ENCODE measurements at regions of chr10 and their contacts with region 1.

Region 1: DNA sequence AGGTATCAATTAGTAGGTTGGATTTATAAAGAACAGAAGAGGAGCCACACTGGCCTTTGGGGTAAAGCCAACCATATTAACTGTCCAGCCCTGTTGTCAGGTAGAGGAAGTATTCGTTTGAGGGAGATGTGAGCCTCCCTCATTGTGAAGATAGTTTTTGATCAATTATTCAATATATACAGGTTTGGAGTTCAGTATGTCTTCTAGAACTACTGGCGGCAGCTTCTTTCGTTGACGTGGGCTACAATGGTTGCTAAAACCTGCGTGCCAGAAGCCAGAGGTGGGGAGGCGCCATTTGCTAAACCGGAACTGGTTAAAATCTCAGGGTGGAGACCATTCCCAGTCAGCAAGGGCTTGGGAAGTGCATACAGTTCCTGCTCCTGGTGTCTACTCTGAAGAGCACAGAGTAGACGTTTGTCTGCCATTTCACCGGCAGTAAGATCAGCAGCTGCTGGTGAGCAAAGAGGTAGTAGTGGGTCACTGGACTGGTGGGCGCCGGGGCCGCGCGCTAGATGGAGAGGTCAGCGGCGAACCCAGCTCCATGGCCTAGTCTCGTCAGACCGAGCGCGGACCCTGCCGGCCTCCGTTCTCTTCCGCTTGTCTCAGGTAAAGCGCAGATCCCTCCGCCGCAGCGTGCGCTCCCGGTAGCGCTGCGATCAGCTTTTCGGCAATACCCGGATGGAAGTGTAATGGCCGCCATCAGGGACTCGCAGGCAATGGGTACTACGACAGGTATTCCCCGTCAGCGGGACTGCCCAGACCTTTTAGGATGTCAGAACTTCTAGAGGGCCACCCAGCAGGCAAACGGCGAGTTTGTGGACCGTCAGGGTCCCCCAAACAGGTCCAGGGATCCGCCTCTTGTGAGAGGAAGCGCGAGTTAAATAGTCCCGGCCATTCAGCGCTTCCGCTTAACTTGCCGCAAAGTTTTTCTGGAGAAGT is at the start of gene ZNF518A:
- DNase-seq: peak; percentile 87
- ATAC-seq: peak; percentile 86
- H3K4me3 Mint-ChIP-seq: peak within 1 kb of the TSS; percentile 97
- H3K27ac Mint-ChIP-seq: peak within 1 kb of the TSS; percentile 100
- H3K4me1 Mint-ChIP-seq: peaks cover 21% of the 10 kb centered on the region
- H3K27me3 Mint-ChIP-seq: peaks cover 24% of the 10 kb centered on the region
- CTCF ChIP-seq: no peak
- total RNA-seq, gene ZNF518A: 23.8 and 28.7 TPM in 2 replicates

Region 2: DNA sequence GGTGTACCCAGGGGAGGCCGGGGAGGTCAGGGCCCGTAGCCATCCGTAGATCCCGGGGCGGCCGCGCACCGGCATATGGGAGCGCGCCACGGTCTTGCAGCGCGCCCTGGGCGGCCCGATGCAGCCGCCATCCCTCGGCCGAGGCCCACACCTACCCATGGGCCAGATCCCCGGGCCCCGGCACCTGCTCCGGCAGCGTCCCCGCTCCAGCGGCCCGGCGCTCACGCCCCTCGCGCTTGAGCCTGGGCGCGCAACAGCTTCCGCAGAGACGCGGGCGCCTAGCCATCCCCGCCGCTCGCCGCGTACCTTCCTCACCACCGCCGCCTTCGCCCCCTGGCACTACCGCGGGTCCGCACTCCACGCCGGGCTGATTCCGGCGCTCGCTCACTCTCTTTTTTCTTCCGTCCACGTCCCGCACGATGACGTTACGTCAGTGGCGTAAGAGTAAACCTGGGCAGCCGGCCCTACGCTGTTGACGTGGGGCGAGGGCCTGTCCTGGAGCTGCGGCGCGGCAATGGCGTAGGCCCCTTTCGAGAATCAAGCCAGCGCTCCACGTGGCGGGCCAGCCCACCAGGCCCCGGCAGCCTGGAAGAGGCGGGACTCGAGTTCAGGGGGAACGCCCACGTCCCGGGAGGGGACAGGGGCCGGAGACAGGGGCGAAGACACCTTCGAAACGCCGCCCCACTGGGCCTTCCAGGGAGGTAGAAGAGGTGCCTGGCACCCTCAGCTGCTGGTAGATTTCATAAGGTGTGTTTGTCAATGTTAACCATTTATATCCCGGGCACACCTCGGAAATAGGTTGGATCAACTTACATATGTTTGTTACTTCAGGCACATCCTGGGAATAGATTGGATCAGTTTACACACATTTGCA is 473.1 kb before region 1 on chr10 and contains the start of gene ALDH18A1:
- CTCF ChIA-PET with region 1: no interaction called
- POLR2A ChIA-PET with region 1: no interaction called
- intact Hi-C with region 1: loop called (anchors 2 kb)
- DNase-seq: peak; percentile 94
- ATAC-seq: peak; percentile 96
- H3K4me3 Mint-ChIP-seq: peak within 1 kb of the TSS; percentile 98
- H3K27ac Mint-ChIP-seq: peak within 1 kb of the TSS; percentile 86
- H3K4me1 Mint-ChIP-seq: peaks cover 31% of the 10 kb centered on the region
- H3K27me3 Mint-ChIP-seq: no peaks in the 10 kb centered on the region
- CTCF ChIP-seq: no peak
- total RNA-seq, gene ALDH18A1: 45.9 and 53.0 TPM in 2 replicates

Region 3: DNA sequence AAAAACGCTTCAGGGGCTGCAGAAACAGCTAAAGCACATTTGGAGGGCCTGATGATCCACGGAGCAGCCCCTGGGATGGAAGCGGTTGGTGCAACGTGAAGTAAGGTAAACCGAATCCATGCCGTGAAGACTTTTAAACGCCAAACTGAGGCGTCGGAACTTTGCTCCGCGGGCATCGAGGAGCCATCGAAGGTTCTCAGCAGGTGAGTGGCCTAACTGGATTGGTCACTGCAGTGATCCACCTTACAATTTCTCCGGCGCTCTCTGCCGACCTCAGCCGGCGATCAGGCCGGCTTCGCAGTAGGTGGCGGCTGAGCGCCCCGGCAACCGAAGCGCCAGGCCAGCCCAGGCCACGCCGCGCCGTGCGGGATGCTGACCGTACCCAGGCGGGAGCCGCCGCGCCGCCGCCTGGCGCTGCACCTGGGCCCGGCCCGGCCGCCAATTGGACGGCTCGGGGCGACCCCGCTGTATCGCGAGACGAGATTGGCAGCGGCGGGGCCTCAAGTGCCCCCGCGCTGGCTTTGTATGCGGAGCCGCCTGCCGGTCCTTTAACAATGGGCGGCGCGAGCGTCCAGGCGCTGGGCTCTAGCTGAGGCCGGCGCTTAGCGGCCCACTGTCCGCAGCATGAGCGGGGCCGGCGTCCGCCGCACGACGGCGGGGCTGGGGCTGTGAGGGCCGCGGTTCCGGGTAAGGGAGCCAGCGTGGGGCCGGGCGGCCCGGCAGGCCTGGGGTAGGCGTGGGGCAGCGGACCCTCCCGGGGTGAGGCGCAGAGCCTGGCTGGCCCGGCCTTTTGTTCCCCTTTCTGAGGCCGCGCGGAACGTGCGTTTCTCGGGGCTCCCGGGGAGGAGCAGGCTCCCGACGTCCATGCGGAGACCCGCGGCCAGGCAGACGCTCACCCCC is 86.4 kb before region 1 on chr10 and contains the start of gene CCNJ:
- CTCF ChIA-PET with region 1: no interaction called
- POLR2A ChIA-PET with region 1: interaction called, 22 read pairs
- intact Hi-C with region 1: loop called (anchors 1 kb)
- DNase-seq: peak; percentile 83
- ATAC-seq: peak; percentile 88
- H3K4me3 Mint-ChIP-seq: peak within 1 kb of the TSS; percentile 93
- H3K27ac Mint-ChIP-seq: peak within 1 kb of the TSS; percentile 80
- H3K4me1 Mint-ChIP-seq: peaks cover 41% of the 10 kb centered on the region
- H3K27me3 Mint-ChIP-seq: no peaks in the 10 kb centered on the region
- CTCF ChIP-seq: no peak
- total RNA-seq, gene CCNJ: 9.8 and 10.2 TPM in 2 replicates

Region 4: GRCh38 chr10:96089670-96090462 is 39.8 kb before region 1 on chr10:
- CTCF ChIA-PET with region 1: interaction called, 16 read pairs
- POLR2A ChIA-PET with region 1: interaction called, 356 read pairs
- intact Hi-C with region 1: loop called (anchors 1 kb)
- DNase-seq: peak; percentile 88
- ATAC-seq: peak; percentile 85
- H3K4me3 Mint-ChIP-seq: peak overlapping the region; percentile 95
- H3K27ac Mint-ChIP-seq: peak overlapping the region; percentile 98
- H3K4me1 Mint-ChIP-seq: peaks cover 8% of the 10 kb centered on the region
- H3K27me3 Mint-ChIP-seq: peaks cover 28% of the 10 kb centered on the region
- CTCF ChIP-seq: no peak

Region 5: DNA sequence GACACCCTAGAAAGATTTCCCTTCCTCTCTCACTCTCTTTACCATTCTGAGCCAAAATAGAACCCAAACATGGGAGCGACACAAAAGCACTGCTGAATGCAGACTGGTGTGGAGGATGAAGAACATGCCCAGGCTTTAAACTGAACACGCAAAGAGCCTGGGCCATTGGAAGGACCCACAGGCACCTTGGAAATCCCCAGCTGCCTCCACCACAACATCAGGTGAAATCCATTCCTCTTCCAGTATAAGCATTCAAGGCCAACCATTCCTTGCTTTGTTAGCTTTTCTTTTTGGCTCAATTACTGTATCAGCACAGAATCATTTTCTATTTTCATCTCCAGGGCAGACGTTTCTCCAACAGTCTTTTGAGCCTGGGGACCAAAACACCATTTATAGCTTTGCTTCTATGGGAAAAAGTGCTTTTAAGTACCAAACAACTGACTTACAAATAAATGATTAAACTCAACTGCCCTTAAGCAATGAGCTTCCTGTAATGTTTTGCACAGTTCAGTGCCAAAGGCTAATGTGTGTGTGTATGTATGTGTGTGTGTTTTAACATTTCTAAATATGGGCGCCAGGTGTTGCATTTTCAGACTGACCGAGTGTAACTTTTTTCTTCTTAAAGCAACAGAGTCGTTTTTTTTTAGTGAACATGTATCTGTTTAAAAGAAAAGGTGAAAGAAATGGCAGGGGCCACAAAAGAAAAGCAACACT is 157.9 kb after region 1 on chr10:
- CTCF ChIA-PET with region 1: interaction called, 3 read pairs
- POLR2A ChIA-PET with region 1: interaction called, 12 read pairs
- intact Hi-C with region 1: loop called (anchors 5 kb)
- DNase-seq: no peak
- ATAC-seq: peak; percentile 72
- H3K4me3 Mint-ChIP-seq: peak overlapping the region; percentile 75
- H3K27ac Mint-ChIP-seq: peak overlapping the region; percentile 96
- H3K4me1 Mint-ChIP-seq: peaks cover 75% of the 10 kb centered on the region
- H3K27me3 Mint-ChIP-seq: no peaks in the 10 kb centered on the region
- CTCF ChIP-seq: no peak

Region 6: DNA sequence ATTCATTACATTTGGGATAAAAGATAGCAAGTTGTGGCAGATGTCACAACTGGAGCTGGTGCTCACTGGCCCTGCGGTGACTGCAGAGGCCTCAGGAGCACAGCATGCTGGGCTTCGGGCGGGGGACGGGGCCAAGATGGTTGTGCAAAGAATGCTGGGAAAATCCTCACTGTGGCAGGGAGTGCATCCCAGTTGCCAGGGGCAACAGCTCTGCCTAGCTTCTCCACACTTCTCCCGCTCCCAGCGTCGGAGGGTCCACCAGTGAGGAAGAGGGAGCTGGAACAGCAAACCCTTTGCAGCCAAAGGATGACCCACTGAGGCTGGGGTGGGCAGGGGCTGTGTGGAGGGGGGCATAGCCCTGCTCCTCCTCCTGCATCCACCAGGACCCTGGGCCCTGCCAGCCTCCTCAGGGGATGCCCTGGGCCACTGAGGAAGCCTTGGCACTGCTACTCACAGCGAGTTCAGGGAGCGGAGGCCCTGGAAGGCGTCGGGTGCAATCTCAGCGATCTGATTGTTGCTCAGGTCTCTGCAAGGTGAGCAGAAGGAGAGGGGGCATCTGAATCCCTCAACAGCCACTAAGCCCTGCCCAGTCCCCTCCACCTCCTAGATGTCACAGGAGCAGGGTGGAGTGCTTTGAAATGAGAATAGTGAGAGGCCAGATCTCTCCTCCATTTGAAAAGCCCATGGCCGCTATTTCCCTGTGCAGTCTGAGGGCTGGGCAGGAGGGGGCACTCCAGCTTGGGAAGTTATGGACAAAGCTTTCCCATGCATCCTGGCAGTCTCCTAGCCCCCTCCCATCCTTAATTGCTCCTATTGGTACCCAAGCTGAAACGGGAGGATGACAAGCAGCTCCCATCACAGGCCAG is 929.6 kb after region 1 on chr10:
- CTCF ChIA-PET with region 1: no interaction called
- POLR2A ChIA-PET with region 1: no interaction called
- intact Hi-C with region 1: no loop called
- DNase-seq: no peak
- ATAC-seq: no peak
- H3K4me3 Mint-ChIP-seq: no peak overlapping the region
- H3K27ac Mint-ChIP-seq: no peak overlapping the region
- H3K4me1 Mint-ChIP-seq: no peaks in the 10 kb centered on the region
- H3K27me3 Mint-ChIP-seq: peaks cover 5% of the 10 kb centered on the region
- CTCF ChIP-seq: no peak